Naive thymus-derived CD4-positive, alpha-beta T cell (primary cell): ENCODE measurements at regions of chr1 and their contacts with region 1.

Region 1: GRCh38 chr1:214261206-214262123 is 19.5 kb upstream of the SMYD2 start:
- DNase-seq: peak; percentile 47 to 82 (median 73)
- ATAC-seq: peak; percentile 98
- H3K4me3 ChIP-seq: no peak overlapping the region
- H3K4me3 Mint-ChIP-seq: peak overlapping the region in 1 of 10 donors; percentile 28
- H3K27ac ChIP-seq: no peak overlapping the region
- H3K27ac Mint-ChIP-seq: no peak overlapping the region
- H3K4me1 ChIP-seq: no peaks in the 10 kb centered on the region
- H3K4me1 Mint-ChIP-seq: peaks cover 0 to 15% (median 0%) of the 10 kb centered on the region in 7 donors
- H3K27me3 ChIP-seq: peaks cover 0 to 9% of the 10 kb centered on the region in 2 donors
- H3K27me3 Mint-ChIP-seq: peaks cover 55 to 75% (median 68%) of the 10 kb centered on the region in 5 donors

Region 2: GRCh38 chr1:213244664-213245091 is 1016.8 kb before region 1 on chr1:
- CTCF ChIA-PET with region 1: interaction called, 3 read pairs
- POLR2A ChIA-PET with region 1: no interaction called
- intact Hi-C with region 1: loop called in 1 of 2 experiments (anchors 5 kb)
- DNase-seq: peak in 5 of 9 donors; percentile 13 to 44 (median 34)
- ATAC-seq: peak; percentile 40
- H3K4me3 ChIP-seq: no peak overlapping the region
- H3K4me3 Mint-ChIP-seq: no peak overlapping the region
- H3K27ac ChIP-seq: no peak overlapping the region
- H3K27ac Mint-ChIP-seq: no peak overlapping the region
- H3K4me1 ChIP-seq: no peaks in the 10 kb centered on the region
- H3K4me1 Mint-ChIP-seq: no peaks in the 10 kb centered on the region
- H3K27me3 ChIP-seq: no peaks in the 10 kb centered on the region
- H3K27me3 Mint-ChIP-seq: no peaks in the 10 kb centered on the region

Region 3: DNA sequence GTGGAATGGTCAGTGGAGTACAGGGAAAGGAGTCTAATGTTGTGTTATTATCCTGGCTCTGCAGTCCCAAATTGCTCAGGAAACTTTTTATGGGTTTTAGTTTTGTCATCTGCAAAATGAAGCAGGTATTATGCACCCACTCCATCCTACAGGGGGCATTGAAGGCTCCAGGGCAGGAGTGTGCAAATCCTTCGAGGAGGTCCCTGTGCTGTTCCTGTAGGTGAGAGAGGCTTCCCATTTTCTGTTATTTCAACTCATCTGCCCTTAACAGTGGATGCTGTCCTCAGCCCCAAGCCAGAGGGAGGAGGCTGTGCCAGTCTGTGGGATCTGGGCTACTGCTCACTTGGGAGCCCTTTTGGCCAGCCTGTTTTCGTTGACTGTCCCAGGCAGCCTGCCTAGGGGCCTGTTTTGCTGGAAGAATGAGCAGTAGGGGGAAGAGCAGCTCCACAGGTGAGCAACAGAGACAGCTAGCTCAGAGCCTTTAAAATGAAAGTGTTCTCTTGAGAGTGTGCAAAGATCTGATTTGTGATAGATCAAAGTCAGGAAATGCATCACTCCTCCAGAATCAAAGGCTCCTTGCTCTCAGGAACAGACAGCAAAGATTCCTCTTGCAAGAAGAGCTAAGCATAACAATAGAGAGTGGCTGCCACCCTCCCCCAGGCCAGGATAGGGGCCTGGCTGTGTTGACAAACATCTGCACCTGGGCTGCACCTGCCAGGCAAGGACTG is 591.3 kb before region 1 on chr1:
- CTCF ChIA-PET with region 1: no interaction called
- POLR2A ChIA-PET with region 1: no interaction called
- intact Hi-C with region 1: loop called in 1 of 2 experiments (anchors 1 kb)
- DNase-seq: peak in 8 of 9 donors; percentile 9 to 89 (median 80)
- ATAC-seq: peak; percentile 93
- H3K4me3 ChIP-seq: no peak overlapping the region
- H3K4me3 Mint-ChIP-seq: peak overlapping the region in 8 of 10 donors; percentile 7 to 67 (median 52)
- H3K27ac ChIP-seq: peak overlapping the region; percentile 48
- H3K27ac Mint-ChIP-seq: peak overlapping the region in 8 of 9 donors; percentile 41 to 97 (median 90)
- H3K4me1 ChIP-seq: peaks cover 0 to 15% of the 10 kb centered on the region in 2 donors
- H3K4me1 Mint-ChIP-seq: peaks cover 7 to 39% (median 29%) of the 10 kb centered on the region in 7 donors
- H3K27me3 ChIP-seq: no peaks in the 10 kb centered on the region
- H3K27me3 Mint-ChIP-seq: no peaks in the 10 kb centered on the region

Region 4: DNA sequence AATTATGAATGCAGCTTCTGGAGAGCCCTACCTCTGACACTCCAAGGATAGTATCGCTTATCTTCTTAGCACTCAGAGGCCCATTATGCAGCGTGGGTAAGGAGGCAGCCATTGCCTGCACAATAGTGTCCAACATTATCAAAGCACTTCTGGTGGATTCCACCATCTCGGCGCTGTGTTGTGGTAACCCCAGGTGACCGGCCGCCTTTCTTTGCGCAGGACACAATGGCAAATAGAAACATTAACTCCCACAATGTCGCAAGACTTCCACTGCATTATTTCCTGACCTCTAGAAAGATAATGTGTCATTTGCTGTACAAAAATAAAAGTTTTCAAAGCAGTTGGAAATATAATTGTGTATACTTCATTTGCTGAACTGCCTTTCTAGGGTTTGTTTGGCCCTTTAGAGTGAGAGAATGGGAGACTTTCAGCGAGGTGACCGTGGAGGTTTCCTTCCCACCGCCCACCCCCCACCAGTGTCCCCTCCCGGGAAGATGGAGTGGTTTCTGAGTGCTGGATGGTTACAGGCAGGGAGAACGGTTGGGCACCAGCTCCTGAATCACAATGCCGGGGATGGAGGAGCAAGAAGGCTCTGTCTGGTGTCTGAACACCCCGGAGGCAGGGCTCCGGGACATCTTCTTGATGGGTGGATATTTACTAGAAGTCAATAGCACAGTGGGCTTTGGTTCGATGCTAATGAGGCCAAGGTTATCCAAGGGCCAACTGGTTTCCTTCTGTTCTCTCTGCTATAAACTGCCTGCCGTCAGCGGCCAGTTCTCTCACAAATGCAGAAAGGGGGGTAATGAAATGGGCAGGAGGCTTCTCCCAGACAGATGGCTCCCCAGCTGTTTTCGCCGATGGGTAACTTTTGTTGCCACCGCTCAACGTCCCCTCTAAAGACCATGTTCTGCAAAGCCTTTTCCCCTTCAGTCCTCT is 489.1 kb before region 1 on chr1:
- CTCF ChIA-PET with region 1: no interaction called
- POLR2A ChIA-PET with region 1: no interaction called
- intact Hi-C with region 1: no loop called
- DNase-seq: no peak
- ATAC-seq: no peak
- H3K4me3 ChIP-seq: no peak overlapping the region
- H3K4me3 Mint-ChIP-seq: no peak overlapping the region
- H3K27ac ChIP-seq: no peak overlapping the region
- H3K27ac Mint-ChIP-seq: no peak overlapping the region
- H3K4me1 ChIP-seq: no peaks in the 10 kb centered on the region
- H3K4me1 Mint-ChIP-seq: peaks cover 0 to 3% (median 0%) of the 10 kb centered on the region in 7 donors
- H3K27me3 ChIP-seq: no peaks in the 10 kb centered on the region
- H3K27me3 Mint-ChIP-seq: peaks cover 0 to 2% (median 0%) of the 10 kb centered on the region in 5 donors

Region 5: DNA sequence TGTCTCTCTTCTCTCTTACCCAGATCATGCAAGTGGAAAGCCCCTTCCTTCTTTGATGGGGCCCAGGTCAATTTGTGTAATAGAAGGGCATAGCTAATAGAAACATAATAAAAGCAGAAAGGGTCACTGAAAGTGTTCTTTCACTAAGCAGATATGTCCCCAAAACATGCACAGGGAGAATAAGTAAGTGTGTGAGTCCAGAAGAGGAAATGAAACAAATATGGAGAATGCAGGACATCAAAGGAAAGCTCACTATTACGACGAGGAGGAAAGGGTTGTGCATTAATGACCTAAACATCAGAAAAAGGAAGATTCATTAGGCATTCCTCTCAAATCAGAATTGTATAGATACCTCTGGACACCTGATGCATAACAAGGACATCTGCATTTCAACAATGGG is 61.9 kb before region 1 on chr1:
- CTCF ChIA-PET with region 1: no interaction called
- POLR2A ChIA-PET with region 1: no interaction called
- intact Hi-C with region 1: no loop called
- DNase-seq: no peak
- ATAC-seq: no peak
- H3K4me3 ChIP-seq: no peak overlapping the region
- H3K4me3 Mint-ChIP-seq: no peak overlapping the region
- H3K27ac ChIP-seq: no peak overlapping the region
- H3K27ac Mint-ChIP-seq: no peak overlapping the region
- H3K4me1 ChIP-seq: no peaks in the 10 kb centered on the region
- H3K4me1 Mint-ChIP-seq: peaks cover 0 to 3% (median 0%) of the 10 kb centered on the region in 7 donors
- H3K27me3 ChIP-seq: no peaks in the 10 kb centered on the region
- H3K27me3 Mint-ChIP-seq: peaks cover 16 to 43% (median 37%) of the 10 kb centered on the region in 5 donors

Region 6: GRCh38 chr1:214241060-214241459 is 20.4 kb before region 1 on chr1:
- CTCF ChIA-PET with region 1: interaction called, 4 read pairs
- POLR2A ChIA-PET with region 1: no interaction called
- intact Hi-C with region 1: loop called in 1 of 2 experiments (anchors 2 kb)
- DNase-seq: no peak
- ATAC-seq: no peak
- H3K4me3 ChIP-seq: no peak overlapping the region
- H3K4me3 Mint-ChIP-seq: no peak overlapping the region
- H3K27ac ChIP-seq: no peak overlapping the region
- H3K27ac Mint-ChIP-seq: no peak overlapping the region
- H3K4me1 ChIP-seq: no peaks in the 10 kb centered on the region
- H3K4me1 Mint-ChIP-seq: peaks cover 0 to 7% (median 0%) of the 10 kb centered on the region in 7 donors
- H3K27me3 ChIP-seq: no peaks in the 10 kb centered on the region
- H3K27me3 Mint-ChIP-seq: peaks cover 0 to 35% (median 23%) of the 10 kb centered on the region in 5 donors

Region 7: DNA sequence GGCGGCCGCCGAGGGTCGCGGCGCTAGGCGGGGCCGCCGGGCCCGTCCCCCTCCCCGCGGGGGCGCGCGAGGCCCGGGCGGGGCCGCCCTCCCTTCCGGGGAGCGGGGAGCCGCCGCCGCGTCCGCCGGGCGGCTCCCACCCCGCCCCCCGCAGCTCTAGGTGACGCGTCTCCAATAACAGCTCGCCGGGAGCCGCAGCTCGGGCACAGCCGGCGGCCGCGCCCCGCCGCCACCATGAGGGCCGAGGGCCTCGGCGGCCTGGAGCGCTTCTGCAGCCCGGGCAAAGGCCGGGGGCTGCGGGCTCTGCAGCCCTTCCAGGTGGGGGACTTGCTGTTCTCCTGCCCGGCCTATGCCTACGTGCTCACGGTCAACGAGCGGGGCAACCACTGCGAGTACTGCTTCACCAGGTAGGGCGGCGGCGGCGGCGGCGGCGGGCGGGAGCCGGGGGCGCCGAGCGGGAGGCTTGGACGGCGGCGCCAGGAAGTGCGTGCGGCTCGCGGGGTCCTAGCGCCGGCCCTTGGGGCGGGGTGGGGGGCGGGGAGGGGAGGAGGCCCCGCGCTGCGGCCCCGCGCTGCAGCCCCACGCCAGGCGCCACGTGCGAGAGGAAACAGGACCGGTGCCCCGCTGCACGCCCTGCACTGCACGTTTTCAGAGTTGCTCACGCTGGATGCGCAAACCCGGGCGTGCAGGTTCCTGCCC is 19.7 kb after region 1 on chr1 and contains the start of gene SMYD2:
- CTCF ChIA-PET with region 1: interaction called, 11 read pairs
- POLR2A ChIA-PET with region 1: interaction called, 4 read pairs
- intact Hi-C with region 1: loop called (anchors 1 kb)
- DNase-seq: peak; percentile 49 to 77 (median 72)
- ATAC-seq: peak; percentile 86
- H3K4me3 ChIP-seq: peak within 1 kb of the TSS; percentile 88
- H3K4me3 Mint-ChIP-seq: peak within 1 kb of the TSS; percentile 79 to 98 (median 90)
- H3K27ac ChIP-seq: peak within 1 kb of the TSS; percentile 82
- H3K27ac Mint-ChIP-seq: peak within 1 kb of the TSS; percentile 81 to 95 (median 91)
- H3K4me1 ChIP-seq: peaks cover 17 to 34% of the 10 kb centered on the region in 2 donors
- H3K4me1 Mint-ChIP-seq: peaks cover 30 to 64% (median 45%) of the 10 kb centered on the region in 7 donors
- H3K27me3 ChIP-seq: no peaks in the 10 kb centered on the region
- H3K27me3 Mint-ChIP-seq: no peaks in the 10 kb centered on the region
- total RNA-seq, gene SMYD2: 24.3 to 39.5 (median 34.4) TPM

Region 8: DNA sequence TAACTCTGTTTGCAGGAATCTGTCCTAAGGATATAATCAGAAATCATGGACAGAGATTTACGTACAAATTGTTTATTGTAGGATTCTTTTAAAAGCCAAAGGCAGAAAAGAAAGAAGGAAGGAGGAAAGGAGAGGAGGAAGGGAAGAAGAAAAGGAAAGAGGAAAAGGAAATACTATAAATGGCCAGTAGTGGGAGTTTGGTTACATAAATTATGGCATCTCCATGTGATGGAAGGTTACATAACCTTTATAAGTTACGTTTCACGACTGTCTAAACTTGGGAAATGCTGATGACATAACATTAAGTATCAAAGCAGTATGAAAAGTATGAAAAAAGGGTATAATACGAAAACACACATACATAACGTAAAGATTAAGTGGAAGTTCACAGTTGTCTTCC is 58.5 kb after region 1 on chr1:
- CTCF ChIA-PET with region 1: interaction called, 312 read pairs
- POLR2A ChIA-PET with region 1: no interaction called
- intact Hi-C with region 1: no loop called
- DNase-seq: no peak
- ATAC-seq: no peak
- H3K4me3 ChIP-seq: no peak overlapping the region
- H3K4me3 Mint-ChIP-seq: no peak overlapping the region
- H3K27ac ChIP-seq: no peak overlapping the region
- H3K27ac Mint-ChIP-seq: peak overlapping the region in 2 of 9 donors; percentile 5 to 10
- H3K4me1 ChIP-seq: no peaks in the 10 kb centered on the region
- H3K4me1 Mint-ChIP-seq: peaks cover 0 to 2% (median 0%) of the 10 kb centered on the region in 7 donors
- H3K27me3 ChIP-seq: no peaks in the 10 kb centered on the region
- H3K27me3 Mint-ChIP-seq: no peaks in the 10 kb centered on the region

Region 9: DNA sequence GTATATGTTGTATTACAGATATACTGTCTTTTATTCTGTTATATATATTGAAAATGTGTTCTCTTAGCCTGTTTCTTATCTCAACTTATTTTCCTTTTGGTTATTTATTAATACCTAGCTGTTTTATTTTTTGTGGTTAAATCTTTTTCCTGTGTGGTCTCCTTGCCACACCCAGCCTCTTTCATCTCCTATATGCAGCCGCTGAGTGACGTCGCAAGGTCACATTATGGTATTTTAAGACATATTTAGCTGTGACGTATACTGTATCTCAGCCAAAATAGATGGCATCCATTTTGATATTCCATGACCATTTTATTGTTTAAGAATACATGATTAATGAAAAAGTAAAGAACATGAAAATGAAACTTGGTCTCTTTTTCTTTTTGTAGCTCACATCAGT is 370.6 kb after region 1 on chr1:
- CTCF ChIA-PET with region 1: interaction called, 4 read pairs
- POLR2A ChIA-PET with region 1: no interaction called
- intact Hi-C with region 1: loop called in 1 of 2 experiments (anchors 1 kb)
- DNase-seq: peak in 7 of 9 donors; percentile 48 to 79 (median 71)
- ATAC-seq: peak; percentile 78
- H3K4me3 ChIP-seq: no peak overlapping the region
- H3K4me3 Mint-ChIP-seq: peak overlapping the region in 9 of 10 donors; percentile 13 to 80 (median 62)
- H3K27ac ChIP-seq: no peak overlapping the region
- H3K27ac Mint-ChIP-seq: peak overlapping the region; percentile 56 to 96 (median 87)
- H3K4me1 ChIP-seq: peaks cover 6 to 15% of the 10 kb centered on the region in 2 donors
- H3K4me1 Mint-ChIP-seq: peaks cover 8 to 47% (median 27%) of the 10 kb centered on the region in 7 donors
- H3K27me3 ChIP-seq: no peaks in the 10 kb centered on the region
- H3K27me3 Mint-ChIP-seq: no peaks in the 10 kb centered on the region